ENCODE measurements at regions of chr20 and their contacts with region 1.

Region 1: GRCh38 chr20:51062065-51062464 is 39.2 kb upstream of the KCNG1 start:
- DNase-seq: peak; percentile 83
- H3K4me3 Mint-ChIP-seq: no peak overlapping the region
- H3K27ac Mint-ChIP-seq: peak overlapping the region; percentile 79
- H3K4me1 Mint-ChIP-seq: peaks cover 44% of the 10 kb centered on the region
- H3K27me3 Mint-ChIP-seq: peaks cover 32% of the 10 kb centered on the region

Region 2: DNA sequence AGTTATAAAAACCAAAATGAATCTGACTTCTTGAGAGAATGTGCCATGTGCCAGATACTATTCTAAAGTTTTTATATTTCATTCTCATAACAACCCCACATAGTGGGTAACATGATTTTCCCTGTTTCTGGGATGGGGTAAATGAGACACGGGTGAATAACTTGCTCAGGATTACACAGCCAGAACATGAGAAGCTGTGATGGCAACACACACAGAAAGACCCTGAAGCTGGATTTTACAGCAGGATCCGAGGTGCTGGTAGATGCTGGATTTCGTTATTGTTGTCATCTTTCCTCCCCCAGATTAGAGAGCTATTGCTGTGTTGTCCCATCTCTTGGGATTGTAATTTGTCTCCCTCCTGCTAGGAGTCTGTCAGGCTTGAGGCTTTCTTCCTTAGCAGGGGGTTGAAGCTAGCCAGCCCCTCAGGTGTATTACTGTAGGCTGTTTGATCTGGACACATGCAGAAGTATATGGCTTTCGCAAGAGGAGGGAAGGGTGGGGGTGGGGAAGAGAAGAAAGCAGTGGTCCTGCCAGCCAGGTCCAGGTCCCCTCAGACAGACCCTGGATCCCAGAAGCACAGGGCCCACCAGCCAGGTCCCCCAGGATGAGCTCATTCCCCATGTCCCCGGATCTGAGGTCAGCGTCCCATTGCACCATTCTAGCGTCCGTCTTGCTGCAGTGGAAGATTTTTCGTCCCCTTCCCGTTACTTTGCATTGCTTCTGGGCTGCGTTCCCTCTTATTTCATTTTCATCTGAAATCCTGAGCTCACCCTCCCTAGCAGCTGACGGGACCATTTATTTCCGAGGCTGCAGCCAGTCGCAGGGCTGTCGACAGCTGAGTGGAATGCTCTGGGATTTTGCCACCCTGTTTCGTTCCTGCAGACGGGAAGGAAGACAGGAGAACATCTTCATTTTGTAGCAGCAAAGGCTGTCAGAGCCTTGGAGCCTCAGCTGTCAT is 31.8 kb before region 1 on chr20:
- CTCF ChIA-PET with region 1: interaction called, 3 read pairs
- intact Hi-C with region 1: loop called (anchors 1 kb)
- DNase-seq: no peak
- H3K4me3 Mint-ChIP-seq: no peak overlapping the region
- H3K27ac Mint-ChIP-seq: no peak overlapping the region
- H3K4me1 Mint-ChIP-seq: peaks cover 6% of the 10 kb centered on the region
- H3K27me3 Mint-ChIP-seq: peaks cover 59% of the 10 kb centered on the region

Region 3: GRCh38 chr20:51121901-51122441 is 59.9 kb after region 1 on chr20:
- CTCF ChIA-PET with region 1: no interaction called
- intact Hi-C with region 1: loop called (anchors 1 kb)
- DNase-seq: no peak
- H3K4me3 Mint-ChIP-seq: no peak overlapping the region
- H3K27ac Mint-ChIP-seq: no peak overlapping the region
- H3K4me1 Mint-ChIP-seq: peaks cover 16% of the 10 kb centered on the region
- H3K27me3 Mint-ChIP-seq: peaks cover 32% of the 10 kb centered on the region

Region 4: GRCh38 chr20:51128198-51128597 is 66.1 kb after region 1 on chr20:
- CTCF ChIA-PET with region 1: interaction called, 4 read pairs
- intact Hi-C with region 1: loop called (anchors 1 kb)
- DNase-seq: peak; percentile 52
- H3K4me3 Mint-ChIP-seq: no peak overlapping the region
- H3K27ac Mint-ChIP-seq: no peak overlapping the region
- H3K4me1 Mint-ChIP-seq: peaks cover 8% of the 10 kb centered on the region
- H3K27me3 Mint-ChIP-seq: peaks cover 5% of the 10 kb centered on the region